ENCODE measurements at regions of chr12 and their contacts with region 1.

Region 1: DNA sequence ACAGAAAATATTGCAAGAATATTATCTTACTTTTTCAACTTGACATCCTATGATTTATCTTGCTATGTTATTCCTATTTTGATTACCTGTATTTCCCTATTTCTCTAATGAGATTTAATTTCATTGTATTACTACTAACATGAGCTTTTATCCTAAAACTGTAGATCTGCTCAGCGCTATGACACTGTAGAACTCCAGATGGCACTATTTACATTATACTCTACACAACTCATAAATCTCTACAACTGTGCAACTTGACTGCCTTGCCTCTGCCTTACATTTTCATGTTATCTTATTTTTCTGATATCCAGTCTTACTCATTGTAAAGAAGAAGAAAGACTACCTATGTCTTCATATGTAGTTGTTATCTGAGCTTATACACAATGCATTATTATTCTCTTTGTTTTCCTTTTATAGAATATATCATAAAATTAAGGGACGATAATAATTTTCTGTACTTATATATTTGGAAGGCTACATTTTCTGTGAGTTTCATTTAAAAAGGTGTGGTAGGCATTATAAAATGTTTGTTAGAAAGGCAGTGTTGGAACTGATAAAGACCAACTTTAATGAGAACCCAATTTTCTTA is 24.1 kb downstream of the NUP37 start:
- DNase-seq: peak; percentile 51
- ATAC-seq: peak; percentile 91
- H3K4me3 ChIP-seq: no peak overlapping the region
- H3K27ac ChIP-seq: no peak overlapping the region
- H3K4me1 ChIP-seq: no peaks in the 10 kb centered on the region
- H3K27me3 ChIP-seq: no peaks in the 10 kb centered on the region
- CTCF ChIP-seq: peak; percentile 76

Region 2: DNA sequence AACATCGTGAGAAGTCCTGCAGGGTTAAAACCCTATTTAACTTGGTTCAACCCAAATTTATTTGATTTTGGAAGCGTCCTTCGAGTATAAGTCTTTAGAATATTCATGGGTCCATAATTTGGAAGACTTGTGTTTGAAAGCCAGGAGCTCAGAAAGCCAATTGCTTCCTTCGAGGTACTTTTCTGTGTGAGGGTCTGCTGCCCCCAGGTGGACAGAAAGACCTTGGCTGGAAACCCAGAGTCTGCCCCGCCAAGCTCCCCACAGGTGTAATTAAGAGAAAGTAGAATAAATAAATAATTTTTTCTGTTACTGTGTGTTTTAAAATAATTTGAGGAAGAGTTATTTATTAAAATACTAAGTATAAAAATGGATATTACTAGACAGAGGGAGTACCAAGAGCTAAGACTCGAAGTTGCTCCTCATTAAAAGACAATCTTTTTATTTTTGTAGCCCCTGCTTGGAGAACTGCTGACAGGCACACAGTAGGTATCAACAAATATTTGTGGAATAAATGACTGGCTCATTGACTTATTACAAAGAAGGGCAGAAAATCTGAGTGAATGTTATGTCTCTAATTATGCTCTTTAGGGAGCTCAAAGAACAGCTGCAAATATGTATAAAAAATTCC is 715.5 kb after region 1 on chr12:
- CTCF ChIA-PET with region 1: no interaction called
- POLR2A ChIA-PET with region 1: no interaction called
- intact Hi-C with region 1: loop called (anchors 5 kb)
- DNase-seq: peak; percentile 45
- ATAC-seq: no peak
- H3K4me3 ChIP-seq: no peak overlapping the region
- H3K27ac ChIP-seq: no peak overlapping the region
- H3K4me1 ChIP-seq: no peaks in the 10 kb centered on the region
- H3K27me3 ChIP-seq: peaks cover 4% of the 10 kb centered on the region
- CTCF ChIP-seq: peak; percentile 66

Region 3: DNA sequence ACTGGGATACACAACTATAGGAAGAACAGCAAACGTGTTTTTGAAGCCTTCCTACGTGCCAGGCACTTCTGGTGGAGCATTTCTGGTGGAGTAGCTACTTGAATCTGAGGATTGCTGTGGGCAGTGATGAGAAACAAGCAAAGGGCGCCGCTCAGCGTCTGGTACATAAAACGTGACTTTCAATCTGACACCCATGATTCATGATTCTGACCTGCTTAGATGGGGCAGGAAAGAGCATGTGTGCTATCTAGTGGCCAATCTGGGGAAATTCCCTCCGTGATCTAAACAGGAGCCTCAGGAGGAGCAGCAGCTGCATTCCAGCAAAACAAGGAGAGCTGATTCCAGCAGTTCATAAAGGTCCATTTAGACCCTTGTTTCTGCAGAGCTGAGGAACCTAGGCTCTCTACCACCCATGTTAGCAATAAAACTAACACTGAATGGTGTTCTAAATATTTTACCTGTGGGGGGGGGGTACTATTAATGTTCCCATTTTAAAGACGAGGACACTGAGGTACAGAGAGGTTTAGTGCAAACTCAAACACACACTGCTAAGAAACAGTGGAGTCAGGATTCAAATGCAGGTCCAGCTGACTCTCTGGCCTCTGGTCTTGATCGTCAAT is 783.5 kb after region 1 on chr12:
- CTCF ChIA-PET with region 1: no interaction called
- POLR2A ChIA-PET with region 1: no interaction called
- intact Hi-C with region 1: loop called (anchors 2 kb)
- DNase-seq: peak; percentile 75
- ATAC-seq: peak; percentile 73
- H3K4me3 ChIP-seq: no peak overlapping the region
- H3K27ac ChIP-seq: no peak overlapping the region
- H3K4me1 ChIP-seq: no peaks in the 10 kb centered on the region
- H3K27me3 ChIP-seq: peaks cover 14% of the 10 kb centered on the region; the same call in 1 of the 2 replicates
- CTCF ChIP-seq: peak; percentile 74

Measured in PC-3 (cell line).